ENCODE measurements at regions of chr12 and their contacts with region 1.

Region 1: GRCh38 chr12:94101738-94102660 is 46.4 kb upstream of the PLXNC1 start:
- DNase-seq: peak; percentile 91
- ATAC-seq: peak; percentile 77
- H3K4me3 Mint-ChIP-seq: peak overlapping the region; percentile 76
- H3K27ac Mint-ChIP-seq: peak overlapping the region; percentile 62
- H3K4me1 Mint-ChIP-seq: peaks cover 30% of the 10 kb centered on the region
- H3K27me3 Mint-ChIP-seq: peaks cover 5% of the 10 kb centered on the region

Region 2: DNA sequence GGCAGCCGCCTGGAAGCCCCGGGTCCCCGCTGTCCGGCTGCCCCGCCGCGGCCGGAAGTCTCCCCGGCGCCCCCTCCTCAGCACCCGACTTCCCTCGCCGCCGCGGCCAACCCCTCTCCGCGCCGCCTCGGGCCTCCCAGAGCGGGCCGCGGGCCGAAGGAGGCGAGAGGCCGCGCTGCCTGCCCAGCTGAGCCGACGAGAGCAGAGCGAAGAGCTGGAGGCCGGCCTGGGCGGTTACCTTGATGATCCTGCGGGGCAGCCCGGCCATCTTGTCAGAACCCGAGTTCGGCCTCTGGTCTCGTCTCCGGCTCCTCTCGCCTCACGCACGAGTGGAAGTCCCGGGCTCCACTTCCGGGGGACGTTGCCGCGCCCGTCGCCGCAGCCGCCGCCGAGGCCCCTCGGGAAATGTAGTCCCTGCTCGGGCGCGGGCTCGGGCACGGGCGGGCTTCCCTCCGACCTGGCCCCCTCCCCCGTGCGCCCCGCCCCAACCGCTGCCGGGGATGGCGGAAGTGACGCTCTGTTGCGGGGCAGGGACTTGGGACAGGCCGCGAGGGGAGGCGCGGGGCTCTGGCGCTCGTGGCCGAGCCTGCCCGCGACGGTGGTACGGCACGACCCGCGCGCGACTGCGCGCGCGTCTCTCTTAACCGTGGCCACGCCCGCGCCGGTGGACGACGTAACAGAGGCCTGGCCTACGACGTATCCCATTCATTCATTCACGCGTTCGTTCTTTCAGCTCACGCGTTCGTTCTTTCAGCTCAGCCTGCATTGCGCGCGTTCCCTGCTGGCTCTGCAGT is 660.2 kb before region 1 on chr12 and contains the start of gene UBE2N:
- CTCF ChIA-PET with region 1: interaction called, 5 read pairs
- POLR2A ChIA-PET with region 1: no interaction called
- intact Hi-C with region 1: loop called in 1 of 2 experiments (anchors 5 kb)
- DNase-seq: peak; percentile 98
- ATAC-seq: peak; percentile 84
- H3K4me3 Mint-ChIP-seq: peak within 1 kb of the TSS; percentile 99
- H3K27ac Mint-ChIP-seq: peak within 1 kb of the TSS; percentile 99
- H3K4me1 Mint-ChIP-seq: peaks cover 48% of the 10 kb centered on the region
- H3K27me3 Mint-ChIP-seq: no peaks in the 10 kb centered on the region
- total RNA-seq, gene UBE2N: 186 to 279 TPM

Region 3: GRCh38 chr12:93521225-93522080 is 580.5 kb before region 1 on chr12:
- CTCF ChIA-PET with region 1: interaction called, 17 read pairs
- POLR2A ChIA-PET with region 1: no interaction called
- intact Hi-C with region 1: loop called in 1 of 2 experiments (anchors 1 kb)
- DNase-seq: no peak
- ATAC-seq: no peak
- H3K4me3 Mint-ChIP-seq: no peak overlapping the region
- H3K27ac Mint-ChIP-seq: no peak overlapping the region
- H3K4me1 Mint-ChIP-seq: no peaks in the 10 kb centered on the region
- H3K27me3 Mint-ChIP-seq: peaks cover 5% of the 10 kb centered on the region

Region 4: DNA sequence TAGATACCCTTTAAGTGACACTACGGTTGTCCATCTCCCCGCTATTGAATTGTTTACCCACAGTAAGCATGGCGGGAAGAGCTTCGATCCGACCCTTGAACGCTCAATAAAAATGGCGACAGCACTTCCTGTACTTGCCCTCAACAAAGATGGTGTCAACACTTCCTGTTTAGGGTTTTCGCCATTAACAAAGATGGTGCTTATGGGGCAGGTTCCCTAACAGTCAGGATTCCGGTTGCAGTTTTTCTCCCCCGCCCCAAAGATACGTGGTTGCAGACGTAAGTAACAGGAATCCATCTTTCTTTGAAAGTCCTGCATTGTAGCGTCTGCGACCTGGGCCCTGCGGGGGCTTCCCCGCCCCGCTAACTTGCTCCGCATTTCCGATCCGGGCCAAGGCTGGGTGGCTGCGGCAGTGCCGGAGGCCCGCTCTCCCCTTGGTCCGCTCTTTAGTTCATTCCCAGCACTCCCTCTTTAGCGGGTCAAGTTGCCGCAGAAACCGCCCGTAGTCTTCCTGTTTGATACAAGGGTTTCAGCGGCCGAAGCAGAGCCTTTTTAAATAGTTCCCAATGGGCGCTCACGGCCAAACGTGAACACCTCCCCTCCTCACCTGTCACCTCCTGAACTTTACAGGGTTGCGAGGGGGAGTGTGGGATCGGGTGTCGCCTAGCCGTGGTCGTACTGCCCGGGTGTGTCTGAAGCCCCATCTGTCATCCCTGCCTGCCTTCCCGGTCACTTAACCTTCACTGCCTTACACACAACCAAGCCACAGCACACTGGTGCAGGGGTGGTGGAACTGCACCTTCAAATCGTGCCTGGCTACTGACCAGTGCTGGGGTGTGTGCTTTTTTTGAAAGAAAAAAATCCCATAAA is 424.6 kb before region 1 on chr12 and contains the start of gene CRADD:
- CTCF ChIA-PET with region 1: interaction called, 11 read pairs
- POLR2A ChIA-PET with region 1: interaction called, 3 read pairs
- intact Hi-C with region 1: loop called (anchors 1 to 2 kb)
- DNase-seq: peak; percentile 90
- ATAC-seq: peak; percentile 97
- H3K4me3 Mint-ChIP-seq: peak within 1 kb of the TSS; percentile 97
- H3K27ac Mint-ChIP-seq: peak within 1 kb of the TSS; percentile 100
- H3K4me1 Mint-ChIP-seq: peaks cover 29% of the 10 kb centered on the region
- H3K27me3 Mint-ChIP-seq: peaks cover 8% of the 10 kb centered on the region
- total RNA-seq, gene CRADD: 5.7 to 7.8 TPM

Region 5: DNA sequence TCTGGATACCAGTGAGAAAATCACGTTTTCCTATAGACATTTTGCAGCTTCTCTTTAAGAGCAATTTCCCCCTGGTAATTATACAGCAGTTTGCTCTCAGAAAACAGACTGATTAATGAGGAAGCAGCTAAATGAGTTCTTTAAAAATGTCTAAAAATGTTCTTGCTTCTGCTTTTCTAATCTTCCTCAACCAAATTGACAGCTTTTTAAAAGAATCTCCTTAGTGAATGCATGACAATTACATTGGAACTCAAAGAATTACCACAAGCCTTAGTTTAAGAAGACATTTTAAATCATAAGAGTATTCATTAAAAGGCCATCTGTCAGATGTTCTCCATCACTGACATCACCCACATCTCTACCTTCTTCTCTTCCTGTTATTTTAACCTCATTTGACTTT is 89.4 kb before region 1 on chr12:
- CTCF ChIA-PET with region 1: interaction called, 8 read pairs
- POLR2A ChIA-PET with region 1: no interaction called
- intact Hi-C with region 1: loop called in 1 of 2 experiments (anchors 1 kb)
- DNase-seq: no peak
- ATAC-seq: no peak
- H3K4me3 Mint-ChIP-seq: no peak overlapping the region
- H3K27ac Mint-ChIP-seq: no peak overlapping the region
- H3K4me1 Mint-ChIP-seq: peaks cover 21% of the 10 kb centered on the region
- H3K27me3 Mint-ChIP-seq: no peaks in the 10 kb centered on the region

Region 6: GRCh38 chr12:94080348-94081009 is 21.5 kb before region 1 on chr12:
- CTCF ChIA-PET with region 1: interaction called, 87 read pairs
- POLR2A ChIA-PET with region 1: no interaction called
- intact Hi-C with region 1: no loop called
- DNase-seq: no peak
- ATAC-seq: no peak
- H3K4me3 Mint-ChIP-seq: no peak overlapping the region
- H3K27ac Mint-ChIP-seq: no peak overlapping the region
- H3K4me1 Mint-ChIP-seq: peaks cover 7% of the 10 kb centered on the region
- H3K27me3 Mint-ChIP-seq: peaks cover 6% of the 10 kb centered on the region

Region 7: DNA sequence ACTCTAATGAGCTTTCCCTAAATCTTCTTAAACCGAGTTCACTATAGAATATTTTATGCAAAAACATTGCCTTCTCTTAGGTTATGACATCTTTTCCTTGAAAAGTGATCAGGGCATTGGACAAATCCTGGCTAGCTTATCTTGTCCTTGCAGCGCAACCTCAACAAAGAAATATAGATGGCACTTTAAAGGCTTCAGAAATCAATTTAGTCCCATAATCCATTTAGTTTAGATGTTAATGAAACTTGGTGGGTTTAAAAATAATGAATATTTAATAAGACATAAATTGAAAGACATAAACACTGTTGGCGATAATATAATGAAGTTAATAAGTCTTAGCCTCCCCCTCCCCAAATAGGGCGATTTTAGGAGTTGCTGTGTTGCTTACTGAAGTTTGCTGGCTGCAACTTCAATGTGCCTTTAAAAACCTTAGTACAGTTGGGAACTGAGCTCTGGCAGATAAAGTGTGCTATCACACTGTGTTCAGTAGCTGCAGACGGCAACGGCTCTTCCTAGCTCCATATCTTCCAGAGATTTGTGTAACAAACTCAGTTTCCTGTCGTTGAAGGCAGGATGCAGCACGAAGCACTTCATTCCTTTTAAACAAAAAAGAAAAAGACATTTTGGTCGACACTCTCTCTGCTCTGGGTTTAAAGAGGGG is 65.9 kb after region 1 on chr12:
- CTCF ChIA-PET with region 1: no interaction called
- POLR2A ChIA-PET with region 1: no interaction called
- intact Hi-C with region 1: no loop called
- DNase-seq: no peak
- ATAC-seq: no peak
- H3K4me3 Mint-ChIP-seq: no peak overlapping the region
- H3K27ac Mint-ChIP-seq: no peak overlapping the region
- H3K4me1 Mint-ChIP-seq: peaks cover 57% of the 10 kb centered on the region
- H3K27me3 Mint-ChIP-seq: no peaks in the 10 kb centered on the region